Gastrocnemius medialis (tissue), 4 donors: ENCODE measurements at regions of chr17 and their contacts with region 1.

Region 1: GRCh38 chr17:28661635-28662537 is at the starts of genes SDF2 and SUPT6H:
- DNase-seq: peak; percentile 81 to 84
- ATAC-seq: peak; percentile 94 to 96
- H3K4me3 ChIP-seq: peak within 1 kb of the TSS; percentile 80 to 92 (median 82)
- H3K27ac ChIP-seq: peak within 1 kb of the TSS; percentile 90 to 96 (median 90)
- H3K4me1 ChIP-seq: peaks cover 33 to 38% of the 10 kb centered on the region in 2 donors
- H3K27me3 ChIP-seq: no peaks in the 10 kb centered on the region
- CTCF ChIP-seq: no peak
- POLR2A ChIP-seq: peak; percentile 92 to 97
- total RNA-seq, gene SDF2: 23.6 to 36.4 (median 28.4) TPM
- total RNA-seq, gene SUPT6H: 48.3 to 81.9 (median 64.8) TPM

Region 2: GRCh38 chr17:28571255-28572122 is 90.4 kb before region 1 on chr17 and contains the start of gene PIGS:
- in situ Hi-C with region 1: loop called in 1 of 4 experiments (anchors 25 kb)
- intact Hi-C with region 1: no loop called
- DNase-seq: peak; percentile 95 to 96
- ATAC-seq: peak; percentile 93 to 97
- H3K4me3 ChIP-seq: peak within 1 kb of the TSS; percentile 70 to 98 (median 89)
- H3K27ac ChIP-seq: peak within 1 kb of the TSS; percentile 84 to 88 (median 87)
- H3K4me1 ChIP-seq: peaks cover 20 to 25% of the 10 kb centered on the region in 2 donors
- H3K27me3 ChIP-seq: no peaks in the 10 kb centered on the region
- CTCF ChIP-seq: no peak
- POLR2A ChIP-seq: peak; percentile 81 to 87
- total RNA-seq, gene PIGS: 25.0 to 63.0 (median 50.0) TPM